Activated T-helper 2 cell treated with anti-CD3 and anti-CD28 coated beads, Interferon-gamma antibody, Interleukin-2, Interleukin-4, amounts not matched to agents 10 μg/mL and 5 μg/mL and 100 μg/mL, durations not matched to agents 14 hours and 24 hours and 36 hours (primary cell): ENCODE measurements at regions of chr16 and their contacts with region 1.

Region 1: DNA sequence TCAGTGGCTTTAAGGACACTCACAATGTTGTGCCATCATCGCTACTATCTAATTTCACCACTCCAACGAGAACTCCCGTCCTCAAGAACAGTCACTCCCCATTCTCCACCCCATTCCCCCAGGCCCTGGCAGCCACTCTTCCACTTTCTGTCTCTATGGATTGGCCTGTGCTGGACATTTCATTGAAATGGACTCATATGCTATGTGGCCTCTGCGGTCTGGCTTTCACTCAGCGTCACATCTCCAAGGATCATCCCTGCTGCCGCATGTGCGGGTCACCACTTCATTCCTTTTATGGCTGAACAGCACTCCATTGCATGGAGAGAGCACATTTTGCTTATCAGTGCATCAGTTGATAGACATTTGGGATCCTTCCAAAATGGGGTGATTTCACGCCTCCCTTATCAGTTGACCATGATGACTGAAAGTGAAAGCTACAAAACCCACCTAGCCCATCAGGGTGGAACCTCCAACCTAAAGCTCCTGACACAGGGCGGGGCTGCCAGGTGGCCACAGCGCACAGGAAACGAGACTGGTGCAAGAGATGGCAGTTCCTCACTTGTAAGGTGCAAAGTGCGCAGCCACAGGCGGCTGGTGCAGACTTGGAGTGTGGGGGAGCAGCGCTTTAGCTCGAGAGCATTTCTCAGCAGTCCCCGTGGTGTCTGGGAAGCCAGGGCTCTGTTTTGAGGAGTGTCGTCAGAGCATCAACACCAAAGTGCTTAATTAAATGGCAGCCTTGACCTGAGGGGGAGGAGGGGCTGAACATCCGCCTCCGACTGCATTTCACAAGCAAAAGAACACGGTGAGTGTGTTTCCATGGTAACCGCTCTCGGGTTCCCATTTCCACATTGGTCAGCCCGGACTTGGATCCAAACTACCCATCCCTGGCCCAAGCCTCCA is 23.8 kb downstream of the COTL1 start:
- DNase-seq: peak; percentile 80
- H3K4me3 Mint-ChIP-seq: peak overlapping the region; percentile 74
- H3K27ac Mint-ChIP-seq: peak overlapping the region; percentile 96
- H3K4me1 Mint-ChIP-seq: peaks cover 56% of the 10 kb centered on the region
- H3K27me3 Mint-ChIP-seq: no peaks in the 10 kb centered on the region

Region 2: DNA sequence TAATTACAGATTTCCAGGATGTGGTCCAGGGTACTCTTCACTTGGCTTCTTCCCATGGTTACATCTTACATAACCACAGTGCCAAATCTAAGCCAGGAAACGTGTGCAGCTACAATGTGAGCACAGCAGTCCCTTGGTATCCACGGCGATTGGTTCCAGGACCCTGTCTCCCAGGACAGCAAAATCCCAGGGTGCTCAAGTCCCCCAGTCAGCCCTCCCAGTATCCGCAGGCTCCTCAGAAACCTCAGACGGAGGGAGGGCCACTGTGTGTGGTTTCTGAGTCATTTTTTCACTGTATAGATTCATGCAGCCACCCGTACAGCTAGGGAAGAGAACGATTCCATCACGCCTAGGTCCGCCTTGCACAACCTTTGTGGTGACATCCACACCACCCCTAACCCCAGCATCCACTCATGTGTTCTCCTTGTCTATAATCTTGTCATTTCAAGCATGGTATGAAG is 236.9 kb before region 1 on chr16:
- intact Hi-C with region 1: no loop called
- DNase-seq: no peak
- H3K4me3 Mint-ChIP-seq: no peak overlapping the region
- H3K27ac Mint-ChIP-seq: peak overlapping the region; percentile 13
- H3K4me1 Mint-ChIP-seq: peaks cover 37% of the 10 kb centered on the region
- H3K27me3 Mint-ChIP-seq: peaks cover 4% of the 10 kb centered on the region

Region 3: GRCh38 chr16:84607694-84608093 is 13.6 kb after region 1 on chr16:
- intact Hi-C with region 1: loop called (anchors 2 kb)
- DNase-seq: peak; percentile 29
- H3K4me3 Mint-ChIP-seq: peak overlapping the region; percentile 70
- H3K27ac Mint-ChIP-seq: peak overlapping the region; percentile 86
- H3K4me1 Mint-ChIP-seq: peaks cover 88% of the 10 kb centered on the region
- H3K27me3 Mint-ChIP-seq: no peaks in the 10 kb centered on the region